Activated naive CD4-positive, alpha-beta T cell treated with anti-CD3 and anti-CD28 coated beads for 36 hours (primary cell): ENCODE measurements at regions of chr6 and their contacts with region 1.

Region 1: DNA sequence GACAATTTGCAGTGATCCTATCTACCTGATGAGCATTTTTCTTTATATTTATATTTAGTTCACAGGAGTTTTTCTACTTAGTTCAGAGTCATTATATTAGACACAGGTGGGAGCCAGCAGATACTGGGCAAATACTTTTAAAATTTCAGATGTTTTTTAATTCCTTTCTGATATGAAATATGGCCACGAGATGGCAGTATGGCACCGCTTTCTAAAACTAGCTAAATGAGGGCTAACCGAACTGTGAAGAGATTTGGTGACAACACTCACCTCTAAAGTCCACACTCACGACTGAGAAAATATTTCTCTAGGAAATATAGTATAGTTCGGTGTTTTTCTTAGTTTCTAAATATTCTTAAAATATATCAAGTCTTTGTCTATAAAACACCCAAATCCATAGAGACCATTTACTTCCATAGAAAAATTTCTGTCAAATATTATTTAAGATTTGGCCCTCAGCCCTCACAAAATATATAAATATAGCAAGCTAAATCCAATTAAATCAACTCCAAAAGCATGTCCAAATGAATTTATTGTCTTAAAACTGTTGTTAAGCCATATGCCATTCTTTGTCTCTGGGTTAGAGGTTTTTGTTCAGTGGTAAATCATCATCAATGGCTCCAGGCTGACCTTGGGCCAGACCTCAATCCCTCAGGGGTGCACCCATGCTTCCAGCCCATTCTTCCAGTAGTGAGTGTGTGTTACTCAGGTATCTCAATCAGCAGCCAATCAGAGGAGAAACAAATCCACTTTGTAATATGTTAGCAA is 63.6 kb downstream of the HUS1B start:
- DNase-seq: peak; percentile 87
- H3K4me3 Mint-ChIP-seq: no peak overlapping the region
- H3K27ac Mint-ChIP-seq: no peak overlapping the region
- H3K4me1 Mint-ChIP-seq: peaks cover 11% of the 10 kb centered on the region
- H3K27me3 Mint-ChIP-seq: no peaks in the 10 kb centered on the region

Region 2: GRCh38 chr6:259901-260508 is 333.3 kb before region 1 on chr6:
- CTCF ChIA-PET with region 1: no interaction called
- intact Hi-C with region 1: no loop called
- DNase-seq: no peak
- H3K4me3 Mint-ChIP-seq: no peak overlapping the region
- H3K27ac Mint-ChIP-seq: no peak overlapping the region
- H3K4me1 Mint-ChIP-seq: peaks cover 40% of the 10 kb centered on the region
- H3K27me3 Mint-ChIP-seq: no peaks in the 10 kb centered on the region

Region 3: GRCh38 chr6:722077-722524 is 128.8 kb after region 1 on chr6:
- CTCF ChIA-PET with region 1: interaction called, 16 read pairs
- intact Hi-C with region 1: loop called (anchors 1 kb)
- DNase-seq: peak; percentile 85
- H3K4me3 Mint-ChIP-seq: no peak overlapping the region
- H3K27ac Mint-ChIP-seq: no peak overlapping the region
- H3K4me1 Mint-ChIP-seq: no peaks in the 10 kb centered on the region
- H3K27me3 Mint-ChIP-seq: no peaks in the 10 kb centered on the region

Region 4: DNA sequence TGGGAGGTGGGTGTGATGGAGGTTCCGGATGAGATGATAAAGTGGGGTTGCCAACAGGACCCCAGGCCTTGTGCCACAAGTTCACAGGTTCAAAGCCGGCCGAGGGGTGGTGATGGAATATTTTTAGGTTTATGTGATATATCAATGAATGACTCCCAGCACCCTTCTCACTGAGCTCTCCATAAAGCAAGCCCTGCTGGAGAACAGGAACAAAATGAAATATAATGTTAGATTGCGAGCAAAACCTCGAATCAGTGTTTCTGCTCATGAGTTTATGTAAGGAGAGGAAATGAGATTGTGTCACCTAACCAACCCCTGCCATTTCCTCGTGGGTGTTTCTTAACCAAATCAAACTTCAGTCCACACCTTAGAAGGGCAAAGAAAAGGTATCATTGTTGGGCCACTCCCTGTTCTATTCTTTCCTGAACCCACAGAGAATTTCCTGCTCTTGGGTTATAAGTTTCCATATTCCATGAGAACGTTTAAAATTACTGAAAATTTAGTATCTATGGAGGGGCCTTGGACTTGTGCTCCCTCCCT is 291.8 kb after region 1 on chr6:
- CTCF ChIA-PET with region 1: no interaction called
- intact Hi-C with region 1: loop called (anchors 10 kb)
- DNase-seq: no peak
- H3K4me3 Mint-ChIP-seq: no peak overlapping the region
- H3K27ac Mint-ChIP-seq: no peak overlapping the region
- H3K4me1 Mint-ChIP-seq: peaks cover 9% of the 10 kb centered on the region
- H3K27me3 Mint-ChIP-seq: peaks cover 6% of the 10 kb centered on the region

Region 5: GRCh38 chr6:1335367-1336037 is 742.2 kb after region 1 on chr6:
- CTCF ChIA-PET with region 1: no interaction called
- intact Hi-C with region 1: no loop called
- DNase-seq: no peak
- H3K4me3 Mint-ChIP-seq: no peak overlapping the region
- H3K27ac Mint-ChIP-seq: no peak overlapping the region
- H3K4me1 Mint-ChIP-seq: no peaks in the 10 kb centered on the region
- H3K27me3 Mint-ChIP-seq: peaks cover 29% of the 10 kb centered on the region

Region 6: DNA sequence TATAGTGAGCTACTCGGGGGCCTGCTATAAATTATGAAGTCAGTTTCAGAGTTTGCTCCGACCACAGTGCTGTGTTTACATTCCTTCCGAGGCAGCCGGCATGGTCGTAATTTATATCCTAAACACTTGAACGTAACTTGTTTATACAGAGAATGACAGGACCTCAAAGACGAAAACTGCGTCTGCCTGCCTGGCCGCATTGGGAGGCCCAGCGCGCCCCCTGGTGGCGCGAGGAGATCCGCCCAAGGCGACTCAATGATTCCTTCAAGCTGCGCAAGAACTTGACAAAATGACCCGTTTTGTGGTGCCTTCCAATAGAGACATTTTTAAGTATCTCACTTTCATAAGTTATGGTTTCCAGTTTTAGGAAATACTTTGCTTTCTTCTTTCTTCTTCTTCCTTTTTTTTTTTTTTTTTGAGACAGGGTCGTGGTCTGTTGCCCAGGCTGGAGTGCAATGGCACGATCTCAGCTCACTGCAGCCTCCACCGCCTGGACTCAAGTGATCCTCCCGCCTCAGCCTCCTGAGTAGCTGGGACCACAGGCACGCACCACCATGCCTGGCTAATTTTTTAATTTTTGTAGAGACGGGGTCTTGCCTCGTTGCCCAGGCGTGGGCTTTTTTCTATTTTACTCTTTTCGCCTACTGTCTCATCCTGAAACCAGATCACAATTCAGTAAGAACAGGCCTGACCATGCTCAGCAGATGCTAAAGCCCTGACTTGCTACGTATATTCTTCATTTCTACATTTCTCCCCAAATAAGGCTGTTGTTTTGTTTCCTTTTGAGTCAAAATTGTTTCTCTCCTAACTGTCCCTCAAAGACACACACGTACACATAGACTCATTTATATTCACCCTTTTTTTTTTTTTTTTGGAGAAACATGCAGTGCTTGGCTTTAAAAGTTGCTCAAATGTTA is 803.9 kb after region 1 on chr6:
- CTCF ChIA-PET with region 1: interaction called, 4 read pairs
- intact Hi-C with region 1: loop called (anchors 1 kb)
- DNase-seq: peak; percentile 80
- H3K4me3 Mint-ChIP-seq: no peak overlapping the region
- H3K27ac Mint-ChIP-seq: no peak overlapping the region
- H3K4me1 Mint-ChIP-seq: peaks cover 10% of the 10 kb centered on the region
- H3K27me3 Mint-ChIP-seq: peaks cover 53% of the 10 kb centered on the region